Left ventricle myocardium superior (tissue), 1 donor: ENCODE measurements at regions of chr3 and their contacts with region 1.

Region 1: DNA sequence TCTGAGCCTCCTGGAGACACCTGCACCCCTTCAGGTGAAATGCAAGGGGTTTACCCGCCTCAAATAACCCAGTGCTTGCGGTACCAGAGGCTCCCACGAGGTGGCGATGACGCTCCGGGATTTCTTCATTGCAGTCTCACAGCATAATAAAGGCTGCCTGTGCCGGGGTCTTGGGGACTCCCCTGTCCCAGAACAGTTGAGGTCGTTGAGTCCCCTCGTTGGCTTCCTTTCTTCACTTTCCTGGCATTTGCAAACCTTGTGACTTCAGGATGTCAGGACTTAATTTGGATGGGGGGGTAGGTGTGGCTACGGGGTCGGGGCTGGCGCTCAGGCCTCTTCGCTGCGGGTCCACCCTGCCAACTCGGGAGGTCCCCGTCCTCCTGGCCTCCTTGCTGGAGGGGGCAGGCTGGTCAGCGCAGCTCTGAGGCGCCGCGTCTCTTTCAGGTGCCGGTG is 1.3 kb downstream of the GNAT1 start:
- DNase-seq: peak; percentile 78
- ATAC-seq: peak; percentile 41

Region 2: GRCh38 chr3:50121416-50122032 is 71.2 kb before region 1 on chr3:
- intact Hi-C with region 1: loop called (anchors 5 kb)
- DNase-seq: peak; percentile 77
- ATAC-seq: peak; percentile 83

Region 3: GRCh38 chr3:50227390-50228183 is 34.9 kb after region 1 on chr3:
- intact Hi-C with region 1: loop called (anchors 5 kb)
- DNase-seq: peak; percentile 97
- ATAC-seq: peak; percentile 92

Region 4: GRCh38 chr3:50274371-50275104 is 81.8 kb after region 1 on chr3:
- intact Hi-C with region 1: loop called (anchors 2 kb)
- DNase-seq: peak; percentile 70
- ATAC-seq: peak; percentile 9